CD4-positive, alpha-beta T cell (primary cell): ENCODE measurements at regions of chr6 and their contacts with region 1.

Region 1: GRCh38 chr6:107674995-107675738 is 148.9 kb downstream of the SCML4 start:
- DNase-seq: peak; percentile 80 to 93 (median 86)
- ATAC-seq: peak; percentile 98
- H3K4me3 ChIP-seq: peak overlapping the region; percentile 18
- H3K4me3 Mint-ChIP-seq: peak overlapping the region; percentile 68
- H3K27ac ChIP-seq: peak overlapping the region in 1 of 2 donors; percentile 18
- H3K27ac Mint-ChIP-seq: peak overlapping the region; percentile 83
- H3K4me1 ChIP-seq: peaks cover 18% of the 10 kb centered on the region
- H3K4me1 Mint-ChIP-seq: peaks cover 14% of the 10 kb centered on the region
- H3K27me3 ChIP-seq: no peaks in the 10 kb centered on the region
- H3K27me3 Mint-ChIP-seq: no peaks in the 10 kb centered on the region
- CTCF ChIP-seq: peak; percentile 90

Region 2: DNA sequence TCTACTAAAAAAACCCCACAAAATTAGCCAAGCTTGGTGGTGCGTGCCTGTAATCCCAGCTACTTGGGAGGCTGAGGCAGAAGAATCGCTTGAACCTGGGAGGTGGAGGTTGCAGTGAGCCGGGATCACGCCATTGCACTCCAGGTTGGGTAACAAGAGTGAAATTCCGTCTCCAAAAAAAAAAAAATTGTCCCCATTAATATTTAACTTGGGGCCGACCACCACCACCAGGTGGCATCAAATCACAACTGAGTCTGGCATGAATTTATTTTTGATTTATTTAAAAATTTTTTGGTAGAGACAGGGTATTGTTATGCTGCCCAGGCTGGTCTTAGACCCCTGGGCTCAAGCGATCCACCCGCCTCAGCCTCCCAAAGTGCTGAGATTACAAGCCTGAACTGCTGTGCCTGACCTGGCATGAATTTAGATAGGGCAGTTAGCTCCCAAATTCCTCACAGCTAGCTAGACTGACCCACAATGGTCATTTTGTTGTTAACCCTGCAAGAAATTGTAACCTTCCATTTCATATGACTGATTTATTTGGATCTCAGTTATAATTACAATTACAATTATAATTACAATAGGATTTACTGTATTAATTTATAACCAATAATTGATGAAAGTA is 542.7 kb before region 1 on chr6:
- CTCF ChIA-PET with region 1: no interaction called
- POLR2A ChIA-PET with region 1: no interaction called
- intact Hi-C with region 1: loop called in 1 of 2 experiments (anchors 10 kb)
- DNase-seq: peak in 6 of 14 experiments; percentile 9 to 37 (median 28)
- ATAC-seq: no peak
- H3K4me3 ChIP-seq: no peak overlapping the region
- H3K4me3 Mint-ChIP-seq: no peak overlapping the region
- H3K27ac ChIP-seq: no peak overlapping the region
- H3K27ac Mint-ChIP-seq: no peak overlapping the region
- H3K4me1 ChIP-seq: no peaks in the 10 kb centered on the region
- H3K4me1 Mint-ChIP-seq: no peaks in the 10 kb centered on the region
- H3K27me3 ChIP-seq: no peaks in the 10 kb centered on the region
- H3K27me3 Mint-ChIP-seq: no peaks in the 10 kb centered on the region
- CTCF ChIP-seq: peak; percentile 31

Region 3: GRCh38 chr6:107704347-107705013 is 29.3 kb after region 1 on chr6:
- CTCF ChIA-PET with region 1: interaction called, 10 read pairs
- POLR2A ChIA-PET with region 1: no interaction called
- intact Hi-C with region 1: no loop called
- DNase-seq: peak in 4 of 14 experiments; percentile 39 to 69 (median 56)
- ATAC-seq: no peak
- H3K4me3 ChIP-seq: no peak overlapping the region
- H3K4me3 Mint-ChIP-seq: no peak overlapping the region
- H3K27ac ChIP-seq: no peak overlapping the region
- H3K27ac Mint-ChIP-seq: peak overlapping the region; percentile 90
- H3K4me1 ChIP-seq: peaks cover 13% of the 10 kb centered on the region
- H3K4me1 Mint-ChIP-seq: peaks cover 61% of the 10 kb centered on the region
- H3K27me3 ChIP-seq: no peaks in the 10 kb centered on the region
- H3K27me3 Mint-ChIP-seq: no peaks in the 10 kb centered on the region
- CTCF ChIP-seq: peak; percentile 86

Region 4: GRCh38 chr6:107866606-107867301 is 191.6 kb after region 1 on chr6:
- CTCF ChIA-PET with region 1: interaction called, 39 read pairs
- POLR2A ChIA-PET with region 1: interaction called, 3 read pairs
- intact Hi-C with region 1: loop called (anchors 1 kb)
- DNase-seq: peak in 6 of 14 experiments; percentile 17 to 76 (median 60)
- ATAC-seq: peak; percentile 78
- H3K4me3 ChIP-seq: no peak overlapping the region
- H3K4me3 Mint-ChIP-seq: no peak overlapping the region
- H3K27ac ChIP-seq: no peak overlapping the region
- H3K27ac Mint-ChIP-seq: peak overlapping the region; percentile 13
- H3K4me1 ChIP-seq: peaks cover 3% of the 10 kb centered on the region
- H3K4me1 Mint-ChIP-seq: peaks cover 7% of the 10 kb centered on the region
- H3K27me3 ChIP-seq: no peaks in the 10 kb centered on the region
- H3K27me3 Mint-ChIP-seq: peaks cover 4% of the 10 kb centered on the region
- CTCF ChIP-seq: peak; percentile 79

Region 5: DNA sequence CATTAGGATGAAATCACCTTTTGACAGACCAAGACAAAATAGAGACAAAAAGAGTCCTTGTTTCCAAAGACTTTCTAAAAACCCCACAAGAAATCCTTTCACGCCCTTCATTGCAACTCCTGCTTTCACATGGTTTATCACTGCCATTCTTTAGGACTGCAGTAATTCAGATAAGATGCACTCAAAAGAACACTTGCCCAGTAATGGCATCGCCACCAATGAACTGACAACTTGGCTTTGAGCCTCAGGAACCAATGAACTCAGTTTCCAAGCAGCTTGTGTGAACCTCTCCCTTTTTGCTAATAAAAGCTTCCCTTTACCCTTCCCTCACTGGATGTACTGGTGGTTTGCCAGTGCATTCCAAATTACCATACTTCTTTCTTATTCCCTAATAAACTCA is 377.5 kb after region 1 on chr6:
- CTCF ChIA-PET with region 1: interaction called, 3 read pairs
- POLR2A ChIA-PET with region 1: no interaction called
- intact Hi-C with region 1: loop called (anchors 1 kb)
- DNase-seq: no peak
- ATAC-seq: no peak
- H3K4me3 ChIP-seq: no peak overlapping the region
- H3K4me3 Mint-ChIP-seq: no peak overlapping the region
- H3K27ac ChIP-seq: no peak overlapping the region
- H3K27ac Mint-ChIP-seq: no peak overlapping the region
- H3K4me1 ChIP-seq: no peaks in the 10 kb centered on the region
- H3K4me1 Mint-ChIP-seq: no peaks in the 10 kb centered on the region
- H3K27me3 ChIP-seq: no peaks in the 10 kb centered on the region
- H3K27me3 Mint-ChIP-seq: no peaks in the 10 kb centered on the region
- CTCF ChIP-seq: no peak

Region 6: GRCh38 chr6:108526739-108527174 is 851.6 kb after region 1 on chr6:
- CTCF ChIA-PET with region 1: no interaction called
- POLR2A ChIA-PET with region 1: no interaction called
- intact Hi-C with region 1: loop called in 1 of 2 experiments (anchors 2 kb)
- DNase-seq: peak in 3 of 14 experiments; percentile 30 to 56 (median 48)
- ATAC-seq: no peak
- H3K4me3 ChIP-seq: no peak overlapping the region
- H3K4me3 Mint-ChIP-seq: no peak overlapping the region
- H3K27ac ChIP-seq: no peak overlapping the region
- H3K27ac Mint-ChIP-seq: no peak overlapping the region
- H3K4me1 ChIP-seq: no peaks in the 10 kb centered on the region
- H3K4me1 Mint-ChIP-seq: no peaks in the 10 kb centered on the region
- H3K27me3 ChIP-seq: no peaks in the 10 kb centered on the region
- H3K27me3 Mint-ChIP-seq: no peaks in the 10 kb centered on the region
- CTCF ChIP-seq: peak; percentile 71